Naive thymus-derived CD8-positive, alpha-beta T cell (primary cell): ENCODE measurements at regions of chr17 and their contacts with region 1.

Region 1: GRCh38 chr17:44218344-44219107 is 949 bp downstream of the UBTF start:
- DNase-seq: peak; percentile 82 to 93 (median 88)
- ATAC-seq: peak; percentile 38 to 42
- H3K4me3 Mint-ChIP-seq: peak overlapping the region; percentile 85 to 100 (median 90)
- H3K27ac Mint-ChIP-seq: peak overlapping the region; percentile 51 to 99 (median 98)
- H3K4me1 Mint-ChIP-seq: peaks cover 38 to 64% (median 54%) of the 10 kb centered on the region in 4 donors
- H3K27me3 Mint-ChIP-seq: no peaks in the 10 kb centered on the region

Region 2: DNA sequence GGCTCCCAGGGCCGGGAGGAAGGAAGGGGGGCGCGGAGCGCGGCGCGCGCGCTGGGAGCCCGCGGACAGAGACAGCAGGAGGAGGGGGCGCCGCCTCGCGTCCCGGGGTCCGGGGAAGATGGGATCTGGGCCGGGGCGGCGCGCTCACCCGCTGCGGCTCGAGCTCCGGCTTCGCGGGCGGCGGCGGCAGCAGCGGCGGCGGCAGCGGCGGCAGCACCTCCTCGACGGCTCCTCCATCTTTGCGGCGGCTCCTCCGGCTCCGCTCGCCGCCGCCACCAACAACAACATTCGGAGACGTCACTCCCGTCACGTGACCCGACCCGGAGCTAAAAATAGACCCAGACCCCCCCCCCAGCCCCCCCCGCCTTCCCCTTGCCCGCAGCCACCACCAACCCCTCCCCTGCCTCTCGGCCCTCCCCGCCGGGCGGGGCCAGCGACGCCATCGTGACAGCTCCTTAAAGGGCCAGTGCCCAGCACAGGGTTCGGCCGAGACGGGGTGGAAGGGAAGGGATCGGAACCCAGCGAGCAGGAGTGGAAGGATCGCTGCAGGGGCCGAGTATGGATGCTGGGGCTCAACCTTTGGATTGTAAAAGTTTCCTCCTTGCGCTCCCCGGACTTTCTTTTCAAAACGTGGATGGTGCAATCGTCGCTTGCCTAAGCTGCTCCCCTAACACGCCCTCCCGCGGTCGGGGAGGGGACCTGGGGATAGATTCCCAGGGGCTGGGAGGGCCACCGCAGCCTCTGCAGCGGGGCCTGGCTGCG is 95.0 kb before region 1 on chr17 and contains the start of gene HDAC5:
- POLR2A ChIA-PET with region 1: interaction called, 13 read pairs
- DNase-seq: peak; percentile 89 to 98 (median 94)
- ATAC-seq: peak; percentile 90 to 93
- H3K4me3 Mint-ChIP-seq: peak within 1 kb of the TSS; percentile 89 to 99 (median 95)
- H3K27ac Mint-ChIP-seq: peak within 1 kb of the TSS; percentile 90 to 98 (median 95)
- H3K4me1 Mint-ChIP-seq: peaks cover 29 to 49% (median 45%) of the 10 kb centered on the region in 4 donors
- H3K27me3 Mint-ChIP-seq: no peaks in the 10 kb centered on the region
- polyA plus RNA-seq, gene HDAC5: 25.3 to 41.8 (median 27.2) TPM

Region 3: GRCh38 chr17:44199553-44200477 is 18.7 kb before region 1 on chr17 and contains the start of gene ATXN7L3:
- POLR2A ChIA-PET with region 1: interaction called, 367 read pairs
- DNase-seq: peak; percentile 91 to 100 (median 98)
- ATAC-seq: peak; percentile 77 to 81
- H3K4me3 Mint-ChIP-seq: peak within 1 kb of the TSS; percentile 85 to 96 (median 90)
- H3K27ac Mint-ChIP-seq: peak within 1 kb of the TSS; percentile 86 to 99 (median 95)
- H3K4me1 Mint-ChIP-seq: peaks cover 39 to 59% (median 48%) of the 10 kb centered on the region in 4 donors
- H3K27me3 Mint-ChIP-seq: no peaks in the 10 kb centered on the region
- polyA plus RNA-seq, gene ATXN7L3: 9.3 to 14.2 (median 10.6) TPM

Region 4: DNA sequence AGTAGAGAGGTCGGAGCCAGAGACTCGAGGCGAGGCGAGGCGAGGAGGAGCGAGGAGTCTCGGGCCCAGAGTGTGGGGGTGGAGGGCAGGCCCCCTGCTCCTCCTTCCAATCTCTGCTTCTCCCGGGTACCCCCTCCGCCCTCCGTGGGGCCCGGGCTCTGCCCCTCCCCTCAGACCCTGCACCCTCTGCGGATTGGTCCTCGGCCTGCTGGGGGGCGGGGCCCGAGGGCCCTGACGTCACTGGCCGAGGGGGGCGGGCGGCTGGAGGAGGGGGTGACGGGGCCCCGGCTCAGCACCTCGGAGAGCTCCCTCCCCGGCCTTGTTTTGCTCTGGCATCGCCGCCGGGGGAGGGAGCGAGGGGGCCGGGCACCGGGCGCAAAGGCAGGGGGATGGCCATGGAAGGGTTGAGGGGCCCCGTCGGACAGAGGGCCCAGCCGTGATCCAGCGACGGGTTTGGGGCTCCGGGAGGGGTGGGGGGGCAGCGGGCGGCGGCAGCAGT is 89.8 kb after region 1 on chr17 and contains the start of gene RUNDC3A:
- POLR2A ChIA-PET with region 1: interaction called, 445 read pairs
- DNase-seq: peak; percentile 83 to 93 (median 88)
- ATAC-seq: peak; percentile 87 to 95
- H3K4me3 Mint-ChIP-seq: peak within 1 kb of the TSS; percentile 39 to 70 (median 57)
- H3K27ac Mint-ChIP-seq: peak within 1 kb of the TSS in 1 of 10 donors; percentile 18
- H3K4me1 Mint-ChIP-seq: peaks cover 8 to 22% (median 17%) of the 10 kb centered on the region in 4 donors
- H3K27me3 Mint-ChIP-seq: peaks cover 12 to 41% (median 31%) of the 10 kb centered on the region in 5 donors
- polyA plus RNA-seq, gene RUNDC3A: not detected

Region 5: GRCh38 chr17:44331249-44331760 is 112.8 kb after region 1 on chr17:
- POLR2A ChIA-PET with region 1: interaction called, 445 read pairs
- DNase-seq: peak in 9 of 10 donors; percentile 56 to 86 (median 74)
- ATAC-seq: peak; percentile 27 to 46
- H3K4me3 Mint-ChIP-seq: no peak overlapping the region
- H3K27ac Mint-ChIP-seq: peak overlapping the region in 4 of 10 donors; percentile 29 to 69 (median 42)
- H3K4me1 Mint-ChIP-seq: peaks cover 7 to 17% (median 12%) of the 10 kb centered on the region in 4 donors
- H3K27me3 Mint-ChIP-seq: no peaks in the 10 kb centered on the region

Region 6: DNA sequence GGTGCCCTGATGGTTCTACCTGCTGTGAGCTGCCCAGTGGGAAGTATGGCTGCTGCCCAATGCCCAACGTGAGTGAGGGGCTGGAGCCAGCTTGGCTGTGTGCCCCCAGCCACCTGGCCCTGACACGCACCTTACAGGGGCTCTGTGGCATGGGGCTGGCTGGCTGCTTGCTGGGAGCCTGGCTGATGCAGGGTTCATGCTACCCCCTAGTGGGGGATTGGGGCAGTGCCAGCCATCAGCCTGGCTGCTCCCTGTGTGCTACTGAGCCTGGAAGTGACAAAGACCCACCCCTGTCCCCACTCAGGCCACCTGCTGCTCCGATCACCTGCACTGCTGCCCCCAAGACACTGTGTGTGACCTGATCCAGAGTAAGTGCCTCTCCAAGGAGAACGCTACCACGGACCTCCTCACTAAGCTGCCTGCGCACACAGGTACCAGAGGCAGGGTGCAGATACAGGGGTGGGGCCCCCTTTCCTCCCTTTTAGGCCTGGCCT is 132.3 kb after region 1 on chr17:
- POLR2A ChIA-PET with region 1: interaction called, 35 read pairs
- DNase-seq: peak; percentile 59 to 82 (median 69)
- ATAC-seq: peak; percentile 56 to 77
- H3K4me3 Mint-ChIP-seq: peak overlapping the region in 2 of 10 donors; percentile 20 to 50
- H3K27ac Mint-ChIP-seq: peak overlapping the region in 2 of 10 donors; percentile 43 to 59
- H3K4me1 Mint-ChIP-seq: peaks cover 8 to 32% (median 19%) of the 10 kb centered on the region in 4 donors
- H3K27me3 Mint-ChIP-seq: no peaks in the 10 kb centered on the region